ENCODE measurements at regions of chr10 and their contacts with region 1.

Region 1: GRCh38 chr10:6108603-6109443 is 20.0 kb downstream of the RBM17 start:
- DNase-seq: no peak
- ATAC-seq: peak; percentile 38 to 48

Region 2: GRCh38 chr10:5814110-5815107 is 294.4 kb before region 1 on chr10:
- intact Hi-C with region 1: no loop called
- DNase-seq: no peak
- ATAC-seq: no peak

Region 3: DNA sequence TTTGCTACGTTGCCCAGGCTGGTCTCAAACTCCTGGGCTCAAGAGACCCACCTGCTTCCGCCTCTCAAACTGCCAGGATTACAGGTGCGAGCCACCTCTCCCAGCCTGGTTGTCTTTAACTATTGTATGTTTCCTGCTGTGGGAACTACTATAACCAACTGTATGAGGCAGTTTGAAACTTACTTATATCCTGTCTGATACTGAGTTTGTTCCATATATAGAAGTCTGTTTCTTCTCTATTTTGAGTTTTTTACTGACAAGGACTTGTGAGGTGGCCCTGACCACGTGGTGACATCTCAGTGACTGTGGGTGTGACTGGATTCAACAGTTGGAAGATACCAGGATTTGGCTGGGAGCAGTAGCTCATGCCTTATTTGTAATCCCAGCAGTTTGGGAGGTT is 204.6 kb before region 1 on chr10:
- intact Hi-C with region 1: no loop called
- DNase-seq: no peak
- ATAC-seq: peak; percentile 71 to 77

Region 4: DNA sequence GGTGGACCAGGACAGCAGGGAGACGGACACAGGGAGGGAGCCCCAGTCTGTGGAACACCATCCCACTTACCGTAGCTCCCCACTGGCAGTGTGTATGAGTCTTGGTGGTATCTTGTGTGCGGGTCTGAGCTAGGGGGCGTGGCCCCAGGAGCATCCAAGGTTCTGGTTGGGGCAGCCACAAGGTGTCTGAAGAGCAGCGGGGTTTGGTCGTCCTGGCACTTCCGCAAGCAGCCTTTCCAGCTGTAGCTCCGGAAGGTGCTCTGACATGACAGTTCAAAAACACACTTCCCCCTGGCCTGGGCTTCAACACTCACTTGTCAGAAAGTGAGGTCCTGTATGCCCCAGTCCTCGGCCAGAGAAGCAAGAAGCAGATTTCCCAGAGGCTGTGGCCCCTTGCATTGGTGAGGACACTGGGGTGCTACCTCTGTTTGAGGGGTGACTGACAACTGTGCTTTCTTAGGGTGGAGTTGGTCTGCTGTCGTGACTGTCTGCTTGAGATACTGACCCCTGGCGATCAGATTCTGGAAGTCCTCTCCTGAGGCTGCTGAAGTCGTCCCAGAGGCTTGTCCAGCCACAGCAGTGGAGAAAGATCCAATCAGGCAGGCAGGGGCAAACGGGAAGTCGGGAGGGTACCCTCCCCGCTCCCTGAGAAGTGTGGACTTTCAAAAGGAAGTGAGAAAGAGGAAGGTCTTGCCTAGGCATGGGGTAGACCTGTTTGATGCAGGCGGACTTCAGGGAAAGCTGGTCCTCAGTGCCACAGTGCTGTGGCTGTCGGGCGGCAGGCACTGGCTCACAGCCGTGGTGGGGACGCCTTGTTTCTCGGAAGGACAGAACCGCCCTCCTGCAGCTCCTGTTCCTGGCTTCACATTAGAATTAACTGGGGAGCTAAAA is 42.5 kb after region 1 on chr10:
- intact Hi-C with region 1: loop called in 1 of 2 experiments (anchors 5 kb)
- DNase-seq: peak; percentile 62
- ATAC-seq: peak; percentile 74 to 84

Region 5: GRCh38 chr10:6401562-6402348 is 292.9 kb after region 1 on chr10:
- intact Hi-C with region 1: loop called in 1 of 2 experiments (anchors 1 kb)
- DNase-seq: peak; percentile 80
- ATAC-seq: peak; percentile 95 to 97

Measured in left cardiac atrium (tissue), 4 donors.